PC-9 (cell line): ENCODE measurements at regions of chr11 and their contacts with region 1.

Region 1: GRCh38 chr11:94767761-94768601 is at the start of gene AMOTL1:
- DNase-seq: peak; percentile 92
- H3K4me3 ChIP-seq: peak within 1 kb of the TSS; percentile 95
- H3K27ac ChIP-seq: peak within 1 kb of the TSS; percentile 90
- H3K4me1 ChIP-seq: peaks cover 60% of the 10 kb centered on the region
- H3K27me3 ChIP-seq: no peaks in the 10 kb centered on the region
- CTCF ChIP-seq: no peak; the same call in 1 of the 2 replicates
- total RNA-seq, gene AMOTL1: 48.0 and 60.5 TPM in 2 replicates

Region 2: DNA sequence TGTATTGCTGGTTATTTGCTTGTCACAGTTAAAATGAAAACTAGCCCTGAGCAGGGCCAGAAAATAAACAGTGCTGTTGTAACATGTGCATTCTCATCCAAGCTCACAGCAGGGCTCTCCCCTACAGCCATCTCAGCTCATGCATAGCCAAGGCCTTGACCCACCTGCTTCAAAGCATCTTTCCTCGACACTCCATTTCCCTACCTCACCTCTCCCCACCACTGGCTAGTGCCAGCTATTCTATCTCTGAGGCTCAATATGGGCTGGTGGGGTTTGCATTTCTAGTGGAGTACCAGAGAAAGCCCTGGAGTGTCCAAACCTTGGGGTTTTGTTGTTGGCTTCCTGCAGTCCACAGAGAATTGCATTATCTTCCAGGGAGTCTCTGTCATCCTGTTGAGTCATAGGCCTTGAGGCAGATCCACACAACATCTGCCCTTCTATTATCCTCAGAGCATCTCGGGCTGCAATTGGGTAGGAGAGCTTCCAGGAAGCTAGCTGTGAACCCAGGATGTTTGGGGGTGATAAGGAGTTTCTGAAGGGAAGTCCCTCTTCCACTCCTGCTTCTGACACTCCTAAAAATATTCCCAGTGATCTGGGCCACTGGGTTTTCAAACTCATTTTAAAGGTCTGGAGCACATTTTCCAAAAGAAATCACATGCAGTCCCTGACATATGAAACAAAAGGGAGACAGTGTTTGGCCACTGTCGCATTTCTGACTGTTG is 35.9 kb before region 1 on chr11:
- CTCF ChIA-PET with region 1: no interaction called
- POLR2A ChIA-PET with region 1: interaction called, 7 read pairs
- intact Hi-C with region 1: loop called (anchors 5 kb)
- DNase-seq: peak in 1 of 2 experiments; percentile 83
- H3K4me3 ChIP-seq: no peak overlapping the region
- H3K27ac ChIP-seq: peak overlapping the region; percentile 86
- H3K4me1 ChIP-seq: peaks cover 99% of the 10 kb centered on the region
- H3K27me3 ChIP-seq: no peaks in the 10 kb centered on the region
- CTCF ChIP-seq: no peak

Region 3: GRCh38 chr11:94794287-94795168 is 26.5 kb after region 1 on chr11:
- CTCF ChIA-PET with region 1: interaction called, 4 read pairs
- POLR2A ChIA-PET with region 1: interaction called, 3 read pairs
- intact Hi-C with region 1: loop called (anchors 1 kb)
- DNase-seq: peak; percentile 70 to 97
- H3K4me3 ChIP-seq: peak overlapping the region; percentile 34
- H3K27ac ChIP-seq: peak overlapping the region; percentile 91
- H3K4me1 ChIP-seq: peaks cover 76% of the 10 kb centered on the region
- H3K27me3 ChIP-seq: no peaks in the 10 kb centered on the region
- CTCF ChIP-seq: no peak

Region 4: DNA sequence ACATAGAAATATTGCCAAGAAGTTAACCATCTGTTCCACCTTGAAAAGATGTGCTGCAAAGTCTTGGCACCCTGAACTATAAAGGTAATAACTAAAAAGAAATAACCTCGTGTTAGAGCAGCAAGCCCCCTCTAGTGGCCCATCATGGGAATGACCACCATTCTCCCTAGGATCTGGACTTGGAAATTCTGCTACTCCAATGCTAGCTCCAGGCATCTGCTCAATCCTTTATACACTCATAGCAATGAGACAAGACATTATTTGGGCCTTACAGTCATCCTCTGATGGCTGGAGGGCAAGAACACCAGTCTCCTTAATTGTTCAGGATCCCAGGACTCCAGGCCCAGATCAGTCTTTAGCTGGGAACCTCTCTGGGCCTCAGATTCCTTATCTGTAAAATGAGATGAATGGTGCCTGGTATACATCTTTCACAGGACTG is 129.4 kb after region 1 on chr11:
- CTCF ChIA-PET with region 1: no interaction called
- POLR2A ChIA-PET with region 1: no interaction called
- intact Hi-C with region 1: loop called (anchors 2 kb)
- DNase-seq: peak in 1 of 2 experiments; percentile 39
- H3K4me3 ChIP-seq: no peak overlapping the region
- H3K27ac ChIP-seq: no peak overlapping the region
- H3K4me1 ChIP-seq: no peaks in the 10 kb centered on the region
- H3K27me3 ChIP-seq: no peaks in the 10 kb centered on the region
- CTCF ChIP-seq: peak; percentile 97